ENCODE measurements at regions of chr14 and their contacts with region 1.

Region 1: GRCh38 chr14:81464247-81465002 is 64.3 kb upstream of the STON2 start:
- DNase-seq: peak; percentile 41 to 74 (median 48)
- ATAC-seq: peak; percentile 77
- H3K4me3 ChIP-seq: peak overlapping the region; percentile 29
- H3K27ac ChIP-seq: peak overlapping the region; percentile 72; the same call in 2 of the 3 replicates
- H3K4me1 ChIP-seq: no peaks in the 10 kb centered on the region
- H3K27me3 ChIP-seq: no peaks in the 10 kb centered on the region; a peak in 1 of 5 replicates
- CTCF ChIP-seq: peak; percentile 69 to 86 (median 78)
- EP300 ChIP-seq: no peak
- POLR2A ChIP-seq: no peak
- RAD21 ChIP-seq: peak; percentile 83 to 87

Region 2: DNA sequence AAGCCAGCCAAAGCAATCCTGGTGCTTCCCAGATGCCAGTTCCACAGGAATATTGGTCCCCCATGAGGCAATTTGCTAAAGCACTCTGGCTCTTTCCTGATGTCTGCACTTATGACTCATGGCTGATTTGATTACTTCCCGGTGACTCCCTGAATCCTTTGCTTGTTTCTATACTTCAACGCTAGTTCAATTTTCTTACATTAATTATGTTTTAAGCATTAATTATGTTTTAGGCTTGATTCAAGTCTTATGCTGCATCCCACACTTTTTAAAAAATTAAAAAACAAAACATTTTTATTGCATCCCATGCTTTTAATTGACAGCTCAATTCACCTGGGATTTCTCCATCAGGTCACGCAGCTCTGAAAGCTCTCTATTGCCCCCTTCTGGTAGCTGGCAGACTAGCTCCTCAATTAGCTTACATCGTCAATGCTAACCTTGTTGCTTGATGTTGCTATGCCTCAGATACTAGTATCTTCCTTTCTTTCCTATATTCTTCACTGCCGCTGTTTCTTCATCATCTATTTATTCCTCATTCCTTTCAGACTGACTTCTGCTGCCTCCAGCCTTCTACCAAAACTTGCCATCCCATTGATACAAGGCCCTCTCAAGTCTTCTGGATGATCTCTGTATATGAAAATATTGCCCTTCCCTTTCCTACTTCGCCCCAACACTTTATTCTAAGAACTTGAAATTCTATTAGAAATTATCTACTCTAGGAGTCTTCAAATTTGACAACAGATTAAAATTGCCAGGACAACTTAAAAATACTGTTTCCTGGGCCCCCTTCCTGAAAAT is 477.0 kb before region 1 on chr14:
- CTCF ChIA-PET with region 1: interaction called, 3 read pairs
- POLR2A ChIA-PET with region 1: no interaction called
- in situ Hi-C with region 1: loop called (anchors 25 kb)
- intact Hi-C with region 1: no loop called
- DNase-seq: peak; percentile 47 to 66 (median 56)
- ATAC-seq: peak; percentile 82
- H3K4me3 ChIP-seq: no peak overlapping the region
- H3K27ac ChIP-seq: no peak overlapping the region
- H3K4me1 ChIP-seq: no peaks in the 10 kb centered on the region
- H3K27me3 ChIP-seq: no peaks in the 10 kb centered on the region; a peak in 1 of 5 replicates
- CTCF ChIP-seq: peak; percentile 51 to 76 (median 72); a peak in 5 of 6 replicates
- EP300 ChIP-seq: no peak
- POLR2A ChIP-seq: no peak
- RAD21 ChIP-seq: peak; percentile 59 to 73

Region 3: DNA sequence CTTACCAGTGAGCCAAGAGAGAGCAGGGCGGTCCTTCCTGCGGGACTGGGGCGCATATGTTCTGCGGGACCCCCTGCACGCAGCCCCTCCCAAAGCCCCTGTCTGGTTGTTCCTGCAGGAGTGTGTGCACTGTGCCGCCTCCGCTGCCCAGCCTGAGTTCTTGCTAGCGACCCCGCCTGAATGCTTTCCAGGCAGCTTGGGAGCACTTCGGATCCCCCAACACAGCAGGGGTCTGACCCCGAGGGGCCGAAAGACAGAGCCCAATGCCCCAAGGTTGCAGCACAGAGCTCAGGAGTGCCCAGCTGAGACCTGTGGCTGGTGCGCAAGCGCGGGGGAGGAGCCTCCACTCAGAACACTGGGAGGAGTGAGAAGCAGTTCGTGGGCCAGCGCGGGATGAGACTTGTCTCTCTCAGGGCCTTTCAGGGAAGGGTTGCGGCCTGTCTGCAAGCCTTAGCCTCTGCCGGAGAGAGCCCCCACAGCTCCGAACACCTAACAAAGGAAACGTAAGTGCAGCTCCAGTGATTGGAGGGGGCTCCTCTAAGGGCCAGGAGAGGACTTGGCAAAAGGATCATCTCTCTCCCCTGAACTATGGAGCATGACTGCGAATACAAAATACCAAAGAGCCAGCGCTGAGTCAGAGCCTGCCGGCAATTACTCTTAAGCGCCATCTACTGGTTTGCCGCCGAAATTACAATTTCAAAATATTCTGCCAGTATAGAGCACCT is 294.2 kb before region 1 on chr14:
- CTCF ChIA-PET with region 1: no interaction called
- POLR2A ChIA-PET with region 1: no interaction called
- in situ Hi-C with region 1: no loop called
- intact Hi-C with region 1: loop called (anchors 2 kb)
- DNase-seq: peak; percentile 67 to 85 (median 76)
- ATAC-seq: peak; percentile 99
- H3K4me3 ChIP-seq: peak overlapping the region; percentile 44
- H3K27ac ChIP-seq: peak overlapping the region; percentile 95
- H3K4me1 ChIP-seq: peaks cover 0 to 8% of the 10 kb centered on the region in 2 experiments; a peak in 4 of 5 replicates
- H3K27me3 ChIP-seq: no peaks in the 10 kb centered on the region
- CTCF ChIP-seq: peak; percentile 74 to 86 (median 80)
- EP300 ChIP-seq: no peak
- POLR2A ChIP-seq: peak; percentile 82
- RAD21 ChIP-seq: peak; percentile 60

Region 4: DNA sequence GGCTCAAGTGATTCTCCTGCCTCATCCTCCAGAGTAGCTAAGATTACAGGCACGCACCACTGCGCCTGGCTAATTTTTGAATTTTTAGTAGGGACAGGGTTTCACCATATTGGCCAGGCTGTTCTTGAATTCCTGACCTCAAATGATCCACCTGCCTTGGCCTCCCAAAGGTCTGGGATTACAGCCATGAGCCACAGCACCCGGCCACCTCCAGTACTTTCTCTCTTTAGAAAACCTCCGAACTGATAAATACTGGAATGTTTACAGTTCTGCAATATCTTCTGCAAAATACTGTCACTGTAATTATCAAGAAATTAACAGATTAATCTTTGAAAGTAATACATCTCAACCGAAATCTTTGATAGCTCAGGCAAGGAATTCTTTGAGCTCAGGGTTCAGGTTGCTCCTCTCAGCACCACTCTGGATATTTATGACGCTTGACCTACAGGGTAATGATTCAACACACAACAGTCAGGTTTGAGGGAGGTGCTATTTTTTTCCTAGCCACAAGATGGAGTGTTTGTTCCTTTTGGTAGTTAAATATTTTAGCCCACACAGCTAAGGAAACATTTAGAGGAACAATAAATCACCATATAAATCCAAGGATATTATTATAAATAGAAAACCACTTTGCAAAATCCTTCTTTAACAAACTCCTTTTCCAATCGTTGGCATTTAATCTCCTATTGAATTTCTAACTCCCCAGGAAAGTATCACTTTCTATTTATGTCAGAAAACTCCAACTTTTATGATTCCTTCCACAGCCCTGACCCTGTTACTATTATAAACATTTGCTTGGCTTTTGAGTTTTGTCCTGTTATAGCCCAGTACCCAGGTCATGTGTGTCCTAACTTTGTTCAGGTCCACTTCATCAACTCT is 195.1 kb before region 1 on chr14:
- CTCF ChIA-PET with region 1: interaction called, 19 read pairs
- POLR2A ChIA-PET with region 1: no interaction called
- in situ Hi-C with region 1: no loop called
- intact Hi-C with region 1: no loop called
- DNase-seq: peak; percentile 61 to 62 (median 61)
- ATAC-seq: peak; percentile 89
- H3K4me3 ChIP-seq: no peak overlapping the region
- H3K27ac ChIP-seq: no peak overlapping the region
- H3K4me1 ChIP-seq: peaks cover 4 to 16% of the 10 kb centered on the region in 2 experiments; a peak in 3 of 5 replicates
- H3K27me3 ChIP-seq: no peaks in the 10 kb centered on the region
- CTCF ChIP-seq: peak; percentile 49 to 79 (median 60); a peak in 4 of 6 replicates
- EP300 ChIP-seq: no peak
- POLR2A ChIP-seq: no peak
- RAD21 ChIP-seq: peak; percentile 67 to 77

Measured in K562 (cell line).